ENCODE measurements at regions of chr20 and their contacts with region 1.

Region 1: DNA sequence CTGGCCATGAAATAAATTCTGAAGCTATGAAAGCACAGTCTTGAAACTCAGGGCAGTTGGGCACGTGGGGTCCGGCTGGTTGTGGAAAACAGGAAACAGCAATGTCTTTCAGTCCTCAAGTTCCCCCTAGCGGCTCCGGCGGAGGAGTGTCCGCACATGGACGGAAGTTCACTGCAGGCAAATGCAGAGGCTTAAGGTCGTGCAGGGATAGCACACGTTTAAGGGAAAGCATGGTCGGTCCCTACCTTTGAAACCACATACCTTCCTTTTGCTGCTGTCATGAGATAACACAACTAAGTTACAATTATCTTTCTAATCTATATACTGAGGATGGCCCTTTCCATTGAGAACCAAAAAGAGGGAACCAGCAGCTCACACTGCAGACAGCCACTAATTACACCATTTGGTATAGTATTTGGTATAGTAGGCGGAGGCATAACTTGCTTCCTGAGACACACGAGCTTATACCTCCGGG is 52.6 kb upstream of the NFATC2 start:
- DNase-seq: peak; percentile 92
- H3K4me3 Mint-ChIP-seq: no peak overlapping the region
- H3K27ac Mint-ChIP-seq: no peak overlapping the region
- H3K4me1 Mint-ChIP-seq: peaks cover 10% of the 10 kb centered on the region
- H3K27me3 Mint-ChIP-seq: no peaks in the 10 kb centered on the region
- CTCF ChIP-seq: peak; percentile 95

Region 2: DNA sequence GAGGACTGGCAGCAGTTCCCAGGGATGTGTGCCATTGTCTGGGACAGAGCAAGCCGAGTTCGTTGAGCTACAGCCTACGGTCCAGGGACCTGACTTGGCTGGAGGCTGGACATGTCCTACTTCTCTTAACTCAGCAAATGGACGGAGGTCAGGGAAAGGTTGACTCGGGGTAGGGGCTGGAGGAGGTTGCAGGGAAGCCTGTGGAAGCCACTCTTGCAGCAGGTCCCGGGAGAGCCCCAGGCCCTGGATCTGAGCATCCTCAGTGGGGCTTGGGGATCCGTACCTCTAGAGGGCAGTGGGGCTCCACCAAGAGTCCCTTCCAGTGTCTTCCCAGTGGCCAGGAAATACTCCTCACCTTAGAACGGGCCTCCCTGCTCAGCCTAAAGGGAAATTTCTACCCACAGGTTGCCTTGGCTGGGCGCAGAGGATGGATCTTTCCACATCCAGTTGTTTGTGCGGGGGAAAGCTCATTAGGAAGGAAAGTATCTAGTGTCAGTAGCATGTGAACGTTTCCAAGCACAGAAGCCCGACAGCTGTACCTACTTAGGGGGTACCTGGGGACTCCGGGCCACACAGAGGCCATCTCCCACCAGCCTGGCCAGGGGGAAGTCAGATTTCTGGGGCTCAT is 222.8 kb before region 1 on chr20:
- CTCF ChIA-PET with region 1: interaction called, 19 read pairs
- intact Hi-C with region 1: loop called (anchors 1 kb)
- DNase-seq: peak; percentile 89
- H3K4me3 Mint-ChIP-seq: no peak overlapping the region
- H3K27ac Mint-ChIP-seq: no peak overlapping the region
- H3K4me1 Mint-ChIP-seq: no peaks in the 10 kb centered on the region
- H3K27me3 Mint-ChIP-seq: peaks cover 48% of the 10 kb centered on the region
- CTCF ChIP-seq: peak; percentile 87

Region 3: GRCh38 chr20:51385646-51386530 is 209.2 kb before region 1 on chr20:
- CTCF ChIA-PET with region 1: interaction called, 29 read pairs
- intact Hi-C with region 1: loop called (anchors 1 kb)
- DNase-seq: peak; percentile 51
- H3K4me3 Mint-ChIP-seq: no peak overlapping the region
- H3K27ac Mint-ChIP-seq: no peak overlapping the region
- H3K4me1 Mint-ChIP-seq: peaks cover 26% of the 10 kb centered on the region
- H3K27me3 Mint-ChIP-seq: peaks cover 32% of the 10 kb centered on the region
- CTCF ChIP-seq: peak; percentile 67

Region 4: DNA sequence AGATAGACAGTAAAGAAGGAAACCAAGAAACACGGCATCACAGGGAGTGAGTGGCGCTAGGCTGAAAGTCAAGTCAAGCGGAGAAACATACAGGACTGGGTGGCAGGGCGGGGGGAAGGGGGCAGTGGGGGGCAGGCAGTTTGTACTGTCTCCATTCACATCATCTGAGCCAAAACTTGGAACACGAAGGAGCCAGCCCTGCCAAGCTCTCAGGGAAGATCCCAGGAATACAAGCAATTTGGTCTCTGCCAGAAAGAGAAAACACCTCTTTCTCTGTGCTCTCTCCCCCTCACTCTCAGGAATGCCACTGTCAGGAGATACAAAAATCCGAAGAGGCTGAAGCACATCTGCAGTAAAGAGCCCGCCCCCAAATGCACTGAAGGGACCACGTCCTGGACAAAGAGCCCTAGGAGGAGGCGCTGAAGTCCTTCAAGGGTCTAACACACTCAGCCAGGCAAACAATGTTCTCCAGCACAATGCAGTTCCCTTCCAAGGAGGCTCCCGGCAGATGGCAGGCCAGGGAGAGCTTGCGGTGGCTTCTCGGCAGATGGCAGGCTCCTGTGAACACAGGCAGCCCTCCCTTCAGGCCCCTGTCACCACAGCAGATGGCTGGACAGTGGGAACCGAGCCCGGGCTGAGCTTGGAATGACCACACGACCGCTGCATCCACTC is 83.1 kb after region 1 on chr20:
- CTCF ChIA-PET with region 1: no interaction called
- intact Hi-C with region 1: no loop called
- DNase-seq: no peak
- H3K4me3 Mint-ChIP-seq: no peak overlapping the region
- H3K27ac Mint-ChIP-seq: no peak overlapping the region
- H3K4me1 Mint-ChIP-seq: no peaks in the 10 kb centered on the region
- H3K27me3 Mint-ChIP-seq: no peaks in the 10 kb centered on the region
- CTCF ChIP-seq: no peak

Measured in Calu3 (cell line).